ENCODE measurements at regions of chr2 and their contacts with region 1.

Region 1: DNA sequence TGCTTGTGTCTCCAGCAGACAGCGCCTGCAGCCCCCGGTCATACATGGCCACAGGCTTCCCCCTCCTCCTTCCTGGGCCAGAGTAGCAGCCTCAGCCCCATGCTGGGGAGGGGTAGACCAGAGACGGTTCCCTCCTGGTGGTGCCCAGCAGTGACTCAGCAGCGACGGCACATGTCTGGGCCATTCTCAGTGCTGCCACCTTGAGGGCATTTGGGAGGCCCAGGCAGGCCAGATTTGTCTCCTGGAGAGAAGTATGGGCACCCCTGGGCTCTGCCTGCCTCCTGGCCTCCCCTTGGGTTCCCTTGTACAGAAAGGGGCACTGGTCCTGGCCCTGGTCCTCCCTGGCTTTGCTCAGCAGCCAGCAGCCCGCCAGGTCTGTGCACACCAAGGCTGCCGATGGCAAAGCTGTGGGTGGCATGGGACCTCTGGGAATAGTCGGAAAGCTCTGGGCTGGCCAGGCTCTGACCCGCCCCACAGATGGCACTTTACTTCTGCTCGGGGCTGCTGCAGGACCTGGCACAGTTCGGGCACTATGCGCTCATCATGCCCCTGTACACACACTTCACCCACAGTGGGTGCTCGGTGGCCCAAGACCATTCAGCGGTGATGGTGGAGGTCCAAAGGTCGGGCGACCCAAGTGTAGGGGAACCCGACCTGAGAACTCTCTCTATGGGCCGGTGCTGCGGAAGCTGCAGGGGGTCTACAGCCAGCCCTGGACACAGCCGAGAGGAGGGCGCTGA is 11.4 kb upstream of the ALPI start:
- DNase-seq: peak; percentile 54 to 85 (median 80)
- H3K4me3 ChIP-seq: no peak overlapping the region
- H3K27ac ChIP-seq: peak overlapping the region in 2 of 5 donors; percentile 37 to 75
- H3K4me1 ChIP-seq: peaks cover 5 to 6% of the 10 kb centered on the region in 2 donors
- H3K27me3 ChIP-seq: no peaks in the 10 kb centered on the region
- CTCF ChIP-seq: peak; percentile 46 to 68 (median 54)
- POLR2A ChIP-seq: no peak

Region 2: DNA sequence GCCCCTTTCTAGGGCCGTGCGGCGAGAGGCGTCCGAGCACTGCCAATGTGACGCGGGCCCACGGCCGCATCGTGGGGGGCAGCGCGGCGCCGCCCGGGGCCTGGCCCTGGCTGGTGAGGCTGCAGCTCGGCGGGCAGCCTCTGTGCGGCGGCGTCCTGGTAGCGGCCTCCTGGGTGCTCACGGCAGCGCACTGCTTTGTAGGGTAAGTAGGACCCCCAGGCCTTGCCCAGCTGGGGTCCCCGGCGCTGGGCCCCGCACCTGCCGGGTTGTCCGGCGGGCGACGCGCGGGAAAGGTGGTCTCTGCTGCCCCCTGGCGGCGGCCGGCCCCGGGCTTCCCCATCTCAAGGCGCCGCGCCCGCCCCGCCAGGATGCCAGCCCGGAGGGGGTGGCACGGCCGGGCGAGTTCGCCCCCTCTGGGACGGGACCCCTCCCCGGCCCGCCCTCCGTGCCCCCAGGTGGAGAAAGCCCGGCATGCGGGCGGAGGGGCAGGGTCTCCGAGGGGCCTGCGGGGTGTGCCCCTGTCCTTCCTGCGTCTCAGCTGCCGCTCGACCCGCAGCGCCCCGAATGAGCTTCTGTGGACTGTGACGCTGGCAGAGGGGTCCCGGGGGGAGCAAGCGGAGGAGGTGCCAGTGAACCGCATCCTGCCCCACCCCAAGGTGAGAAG is 77.5 kb after region 1 on chr2:
- intact Hi-C with region 1: loop called (anchors 2 kb)
- DNase-seq: peak in 4 of 7 donors; percentile 41 to 66 (median 61)
- H3K4me3 ChIP-seq: peak overlapping the region in 1 of 4 donors; percentile 29
- H3K27ac ChIP-seq: no peak overlapping the region
- H3K4me1 ChIP-seq: peaks cover 7 to 23% of the 10 kb centered on the region in 2 donors
- H3K27me3 ChIP-seq: peaks cover 36% of the 10 kb centered on the region
- CTCF ChIP-seq: peak; percentile 30 to 95 (median 70)
- POLR2A ChIP-seq: no peak